ENCODE measurements at regions of chr9 and their contacts with region 1.

Region 1: GRCh38 chr9:128254855-128255759 is 20.7 kb downstream of the GOLGA2 start:
- DNase-seq: peak; percentile 16
- ATAC-seq: peak; percentile 57
- H3K4me3 ChIP-seq: no peak overlapping the region
- H3K27ac ChIP-seq: peak overlapping the region; percentile 43; the same call in 1 of the 2 replicates
- H3K4me1 ChIP-seq: peaks cover 4 to 22% of the 10 kb centered on the region in 2 experiments; a peak in 2 of 4 replicates
- H3K27me3 ChIP-seq: no peaks in the 10 kb centered on the region
- CTCF ChIP-seq: peak; percentile 73 to 97 (median 95); a peak in 5 of 6 replicates
- POLR2A ChIP-seq: no peak
- RAD21 ChIP-seq: no peak

Region 2: DNA sequence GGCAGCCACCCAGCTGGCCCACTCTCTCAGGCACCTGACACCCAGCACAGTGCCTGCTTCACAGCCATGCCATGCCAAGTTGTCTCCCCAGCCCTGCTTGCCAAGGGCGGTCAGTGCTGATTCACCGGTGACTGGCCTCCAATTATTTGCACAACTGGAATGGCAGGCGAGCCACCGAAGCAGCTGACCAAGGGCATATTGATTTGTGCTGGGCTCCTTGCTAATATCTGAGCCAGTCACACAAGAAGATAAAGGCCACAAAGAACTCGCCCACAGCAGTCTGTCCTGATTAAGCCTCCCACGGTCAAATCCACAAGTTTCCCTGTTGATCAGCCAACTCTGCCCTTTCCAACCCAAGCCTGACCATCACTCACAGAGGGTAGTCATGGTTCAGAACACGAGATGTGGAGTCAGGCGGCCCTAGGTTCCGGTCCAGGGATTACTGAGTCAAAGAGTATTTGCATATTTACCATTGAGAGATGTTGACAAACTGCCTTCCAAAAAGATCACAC is 267.9 kb before region 1 on chr9:
- CTCF ChIA-PET with region 1: no interaction called
- POLR2A ChIA-PET with region 1: no interaction called
- RAD21 ChIA-PET with region 1: no interaction called
- intact Hi-C with region 1: no loop called
- DNase-seq: no peak
- ATAC-seq: peak; percentile 82
- H3K4me3 ChIP-seq: peak overlapping the region in 1 of 2 experiments; percentile 32; a peak in 1 of 4 replicates
- H3K27ac ChIP-seq: peak overlapping the region; percentile 19; the same call in 1 of the 2 replicates
- H3K4me1 ChIP-seq: peaks cover 8 to 28% of the 10 kb centered on the region in 2 experiments
- H3K27me3 ChIP-seq: no peaks in the 10 kb centered on the region
- CTCF ChIP-seq: no peak
- POLR2A ChIP-seq: no peak
- RAD21 ChIP-seq: no peak

Region 3: DNA sequence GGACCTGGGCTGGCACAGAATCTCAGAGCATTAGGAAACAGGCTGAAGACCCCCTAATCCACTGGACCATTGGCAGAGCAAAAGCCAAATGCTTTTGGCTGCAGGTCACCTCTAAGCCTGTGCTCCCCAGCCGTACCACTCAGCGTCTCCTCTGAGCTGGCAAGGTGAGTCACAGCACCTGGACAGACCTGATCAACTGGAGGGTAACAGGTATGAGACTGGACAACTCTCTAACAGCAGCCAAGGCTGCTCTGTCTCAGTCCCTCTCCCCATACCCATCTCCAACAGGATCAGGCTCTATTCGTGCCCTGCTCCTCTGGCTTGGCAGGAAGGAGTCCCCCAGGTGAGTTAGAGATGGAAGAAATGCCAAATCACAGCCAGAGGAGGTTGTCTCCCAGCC is 16.0 kb after region 1 on chr9:
- CTCF ChIA-PET with region 1: interaction called, 6 read pairs
- POLR2A ChIA-PET with region 1: interaction called, 4 read pairs
- RAD21 ChIA-PET with region 1: no interaction called
- intact Hi-C with region 1: loop called (anchors 2 kb)
- DNase-seq: peak; percentile 77
- ATAC-seq: peak; percentile 78
- H3K4me3 ChIP-seq: peak overlapping the region; percentile 1 to 51; a peak in 2 of 4 replicates
- H3K27ac ChIP-seq: peak overlapping the region; percentile 68
- H3K4me1 ChIP-seq: peaks cover 22 to 35% of the 10 kb centered on the region in 2 experiments
- H3K27me3 ChIP-seq: no peaks in the 10 kb centered on the region
- CTCF ChIP-seq: no peak
- POLR2A ChIP-seq: no peak
- RAD21 ChIP-seq: no peak

Region 4: DNA sequence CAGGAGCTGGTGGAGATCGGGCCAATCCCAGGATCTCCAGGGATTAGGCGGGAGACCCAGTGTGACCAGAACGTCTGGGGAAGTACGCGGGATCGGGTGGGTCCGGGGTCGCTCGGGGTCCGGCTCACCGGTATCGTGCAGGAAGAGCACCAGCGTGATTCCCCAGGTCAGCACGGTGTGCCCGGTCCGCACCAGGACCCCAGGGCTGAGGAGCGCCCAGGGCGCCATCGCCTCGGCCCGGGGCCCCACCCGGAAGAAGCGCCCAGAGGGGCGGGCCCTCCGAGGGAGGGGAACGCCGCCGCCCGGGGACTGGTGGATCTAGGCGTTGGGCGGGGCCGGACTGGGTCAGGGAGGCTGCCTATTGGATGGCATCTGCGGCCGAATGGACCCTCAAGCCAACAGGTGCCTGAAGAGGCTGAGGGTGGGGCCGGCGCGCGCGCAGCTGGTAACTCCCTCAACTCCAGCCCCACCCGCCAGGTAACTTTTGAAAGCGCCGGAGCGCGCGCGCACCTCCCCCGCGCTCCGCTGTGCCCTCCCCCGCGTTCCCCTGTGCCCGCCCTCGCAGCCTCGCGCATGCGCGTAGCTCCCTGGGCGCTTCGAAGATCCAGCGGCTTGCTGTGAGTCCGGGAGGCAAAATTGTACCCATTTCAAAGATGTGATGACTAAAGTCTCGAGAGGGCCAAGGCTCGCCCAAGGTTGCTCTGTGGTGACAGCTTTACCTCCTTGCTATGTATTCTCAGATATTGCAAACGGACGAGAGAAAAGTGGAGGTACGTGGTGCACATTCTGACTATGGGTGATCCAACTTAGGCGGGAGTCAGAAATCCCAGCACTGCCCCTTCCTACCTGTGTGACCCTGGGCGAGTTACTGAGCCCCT is 469.0 kb after region 1 on chr9 and contains the start of gene ZDHHC12:
- CTCF ChIA-PET with region 1: no interaction called
- POLR2A ChIA-PET with region 1: no interaction called
- RAD21 ChIA-PET with region 1: no interaction called
- intact Hi-C with region 1: no loop called
- DNase-seq: peak; percentile 96
- ATAC-seq: peak; percentile 93
- H3K4me3 ChIP-seq: peak within 1 kb of the TSS; percentile 93 to 97
- H3K27ac ChIP-seq: peak within 1 kb of the TSS; percentile 65
- H3K4me1 ChIP-seq: peaks cover 9 to 28% of the 10 kb centered on the region in 2 experiments
- H3K27me3 ChIP-seq: no peaks in the 10 kb centered on the region
- CTCF ChIP-seq: no peak
- POLR2A ChIP-seq: peak; percentile 82
- RAD21 ChIP-seq: no peak
- total RNA-seq, gene ZDHHC12: 57.6 TPM

Measured in HCT116 (cell line).